ENCODE measurements at regions of chr10 and their contacts with region 1.

Region 1: DNA sequence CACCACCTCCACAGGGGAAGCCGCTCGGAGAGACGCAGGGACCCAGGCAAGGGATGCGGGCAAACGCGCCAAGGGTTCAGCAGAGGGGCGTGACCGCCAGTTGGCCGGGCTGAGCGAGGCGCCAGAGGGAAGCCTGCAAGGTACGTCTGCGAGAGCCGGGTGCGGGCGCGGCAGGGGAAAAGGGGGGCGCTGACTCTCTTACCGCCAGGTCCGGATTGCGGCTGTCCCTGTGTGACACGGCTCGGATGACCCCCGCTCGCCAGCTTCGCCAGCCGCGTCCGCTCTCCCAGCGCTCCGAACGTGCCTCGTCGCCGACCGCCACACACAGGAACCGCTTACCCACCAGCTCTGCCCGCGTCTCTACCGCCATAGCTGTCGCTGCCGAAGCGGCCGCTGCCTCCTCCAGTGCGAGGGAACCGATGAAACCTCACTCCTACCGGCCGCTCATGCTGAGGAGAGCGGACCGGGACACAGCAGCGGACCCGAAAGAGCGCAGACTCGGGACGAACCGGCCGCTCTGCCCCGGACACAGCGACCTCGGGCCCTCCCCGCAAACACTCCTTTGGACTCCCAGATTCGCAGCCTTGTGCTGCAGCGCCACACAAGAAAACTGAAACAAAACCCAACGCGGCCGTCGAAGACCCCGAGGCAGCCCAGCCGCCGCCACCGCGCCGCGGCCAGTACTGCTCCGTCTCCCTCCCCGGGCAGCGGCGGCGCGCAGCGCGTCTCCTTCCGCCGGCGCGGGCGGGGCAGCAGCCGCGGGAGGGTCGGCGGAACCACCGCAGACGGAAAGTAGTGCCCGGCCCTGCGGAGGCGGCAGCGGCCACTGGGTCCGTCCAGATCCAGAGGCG is at the start of gene JMJD1C:
- DNase-seq: no peak
- H3K4me3 ChIP-seq: peak within 1 kb of the TSS; percentile 71 to 87
- H3K27ac ChIP-seq: peak within 1 kb of the TSS; percentile 93
- H3K4me1 ChIP-seq: peaks cover 9% of the 10 kb centered on the region
- H3K27me3 ChIP-seq: no peaks in the 10 kb centered on the region
- CTCF ChIP-seq: no peak
- POLR2A ChIP-seq: peak in 1 of 2 donors; percentile 61
- total RNA-seq, gene JMJD1C: 105 TPM

Region 2: DNA sequence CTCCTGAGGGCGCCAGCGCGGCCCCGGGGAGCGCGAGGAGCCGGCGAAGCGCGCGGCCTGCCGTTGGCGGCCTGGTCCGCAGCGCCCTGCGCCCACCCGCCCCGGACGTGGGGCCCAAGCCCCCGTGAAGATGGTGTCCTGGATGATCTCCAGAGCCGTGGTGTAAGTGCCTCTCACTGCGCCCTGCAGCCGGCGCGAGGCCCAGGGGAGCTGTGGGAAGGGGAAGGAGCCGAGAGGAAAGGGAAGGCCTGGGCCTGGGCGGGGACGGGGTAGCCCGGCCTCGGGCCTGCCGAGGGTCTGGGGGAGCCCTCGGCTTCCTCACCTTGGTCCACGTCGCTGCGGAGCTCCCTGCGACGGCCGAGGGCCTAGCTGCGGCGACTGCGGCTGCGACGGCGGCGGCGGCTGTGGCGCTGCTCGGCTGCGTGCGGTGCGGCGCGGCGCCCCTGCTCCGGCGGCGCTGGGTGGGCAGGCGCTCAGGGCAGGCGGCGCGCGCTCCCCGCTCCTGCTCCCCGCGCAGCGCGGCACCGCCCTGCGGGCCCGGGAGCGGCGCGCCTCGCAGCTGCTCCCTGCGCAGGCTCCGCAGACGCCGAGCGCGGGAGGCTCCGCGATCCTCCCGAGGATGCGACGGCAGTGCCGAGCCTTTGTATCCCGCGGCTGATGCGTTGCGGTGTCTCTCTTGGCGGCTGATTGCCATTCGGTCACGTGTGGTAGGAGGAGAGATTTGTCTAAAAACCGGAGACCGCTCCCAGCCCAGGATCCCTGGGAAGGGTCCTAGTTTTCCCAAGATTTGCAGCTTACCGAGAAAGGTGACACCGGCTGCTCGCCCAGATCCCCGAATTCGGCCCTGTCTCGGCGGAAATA is 56.1 kb after region 1 on chr10:
- intact Hi-C with region 1: loop called (anchors 10 kb)
- DNase-seq: no peak
- H3K4me3 ChIP-seq: peak overlapping the region; percentile 73 to 96
- H3K27ac ChIP-seq: peak overlapping the region; percentile 98
- H3K4me1 ChIP-seq: peaks cover 58% of the 10 kb centered on the region
- H3K27me3 ChIP-seq: no peaks in the 10 kb centered on the region
- CTCF ChIP-seq: no peak
- POLR2A ChIP-seq: peak in 1 of 2 donors; percentile 45